Activated naive CD8-positive, alpha-beta T cell treated with anti-CD3 and anti-CD28 coated beads, Interleukin-2, amount 10 ng/mL, durations not matched to agents 7 days and 5 days (primary cell): ENCODE measurements at regions of chr2 and their contacts with region 1.

Region 1: GRCh38 chr2:201642579-201643215 is 606 bp downstream of the TMEM237 start:
- DNase-seq: peak; percentile 97
- ATAC-seq: peak; percentile 89
- H3K4me3 Mint-ChIP-seq: peak overlapping the region; percentile 97
- H3K27ac Mint-ChIP-seq: peak overlapping the region; percentile 98
- H3K4me1 Mint-ChIP-seq: peaks cover 15% of the 10 kb centered on the region
- H3K27me3 Mint-ChIP-seq: no peaks in the 10 kb centered on the region

Region 2: GRCh38 chr2:201780674-201781581 is 138.2 kb after region 1 on chr2 and contains the start of gene ALS2:
- POLR2A ChIA-PET with region 1: interaction called, 16 read pairs
- DNase-seq: peak; percentile 97
- ATAC-seq: peak; percentile 95
- H3K4me3 Mint-ChIP-seq: peak within 1 kb of the TSS; percentile 98
- H3K27ac Mint-ChIP-seq: peak within 1 kb of the TSS; percentile 98
- H3K4me1 Mint-ChIP-seq: peaks cover 23% of the 10 kb centered on the region
- H3K27me3 Mint-ChIP-seq: peaks cover 11% of the 10 kb centered on the region
- total RNA-seq, gene ALS2: 15.3 to 16.7 TPM

Region 3: DNA sequence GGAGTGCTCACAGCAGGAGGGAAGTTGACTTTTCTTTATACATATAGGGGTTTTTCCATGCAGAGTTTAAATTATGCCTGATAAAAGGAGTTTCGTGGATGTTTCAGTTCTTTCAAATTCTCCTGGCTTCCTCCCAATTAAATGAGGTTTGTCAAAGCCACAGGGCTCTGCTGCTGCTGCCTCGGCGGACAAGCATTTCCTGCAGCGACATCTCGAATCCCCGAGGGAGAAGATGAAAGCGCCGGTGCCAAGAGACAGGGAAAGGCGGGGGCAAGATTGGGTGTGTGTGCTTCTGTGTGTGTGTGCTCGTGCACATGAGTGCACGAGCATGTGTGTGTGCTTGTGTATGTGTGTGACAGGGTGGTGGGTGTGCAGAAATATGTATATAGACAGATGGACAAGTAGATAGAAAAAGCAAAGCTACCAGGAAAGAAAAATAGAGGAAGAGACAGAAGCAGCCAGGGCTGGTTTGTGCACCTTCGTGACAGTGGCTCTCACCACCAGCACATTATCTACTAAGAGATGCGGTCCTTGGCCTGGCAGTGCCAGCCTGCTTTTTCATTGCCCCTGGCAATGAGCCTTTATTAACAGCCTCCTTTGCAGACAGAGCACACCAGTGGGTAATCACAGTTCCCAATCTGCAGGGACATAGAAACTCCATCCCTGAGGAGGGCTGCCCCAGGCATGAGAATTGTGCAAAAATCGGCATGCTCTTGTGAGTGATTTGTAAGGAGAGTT is 239.8 kb after region 1 on chr2:
- POLR2A ChIA-PET with region 1: no interaction called
- DNase-seq: no peak
- ATAC-seq: no peak
- H3K4me3 Mint-ChIP-seq: peak overlapping the region; percentile 58
- H3K27ac Mint-ChIP-seq: no peak overlapping the region
- H3K4me1 Mint-ChIP-seq: peaks cover 25% of the 10 kb centered on the region
- H3K27me3 Mint-ChIP-seq: peaks cover 80% of the 10 kb centered on the region